Mammary epithelial cell (primary cell): ENCODE measurements at regions of chr14 and their contacts with region 1.

Region 1: DNA sequence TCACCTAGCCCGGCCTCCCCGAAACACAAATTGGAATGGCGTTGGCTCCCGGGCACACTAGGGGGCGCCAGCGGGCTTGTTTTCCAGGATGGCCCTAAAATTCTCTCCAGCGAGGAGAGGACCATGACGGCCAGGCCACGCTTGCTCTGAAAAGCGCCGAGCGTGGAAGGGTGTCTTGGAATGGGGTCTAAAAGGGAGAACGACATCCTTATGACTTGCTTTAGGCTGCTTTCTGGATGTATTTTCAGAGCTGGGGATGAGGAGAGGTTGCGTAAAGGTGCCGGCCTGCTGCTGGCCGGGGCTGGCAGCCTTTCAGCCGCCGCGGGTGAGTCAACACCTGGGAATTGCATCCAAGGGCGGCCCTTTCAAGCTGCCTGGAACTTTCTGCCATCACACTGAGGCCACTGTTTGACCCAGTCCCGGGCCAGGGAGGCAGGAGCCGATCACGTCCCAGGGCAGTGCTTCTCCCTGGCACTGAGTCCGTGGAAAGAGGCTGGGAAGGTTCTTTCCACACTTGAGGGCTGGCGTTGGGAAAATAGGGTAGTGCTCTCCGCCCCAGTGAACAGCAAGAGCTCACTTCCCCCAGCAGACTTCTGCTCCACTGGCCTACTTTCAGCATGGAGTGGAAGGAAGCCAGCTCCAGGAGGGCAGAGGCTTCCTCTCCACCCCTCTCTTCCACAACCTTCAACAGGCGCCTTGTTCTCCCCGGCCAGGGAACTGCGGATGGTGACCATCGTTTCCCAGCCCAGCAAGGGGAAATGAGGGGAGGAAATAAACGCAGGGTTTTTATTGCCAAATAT is 216.2 kb downstream of the TTC8 start:
- DNase-seq: peak; percentile 82
- H3K4me3 ChIP-seq: peak overlapping the region; percentile 28 to 47 (median 47)
- H3K27ac ChIP-seq: peak overlapping the region; percentile 69
- H3K4me1 ChIP-seq: peaks cover 14% of the 10 kb centered on the region
- H3K27me3 ChIP-seq: no peaks in the 10 kb centered on the region
- CTCF ChIP-seq: peak; percentile 95 to 99

Region 2: DNA sequence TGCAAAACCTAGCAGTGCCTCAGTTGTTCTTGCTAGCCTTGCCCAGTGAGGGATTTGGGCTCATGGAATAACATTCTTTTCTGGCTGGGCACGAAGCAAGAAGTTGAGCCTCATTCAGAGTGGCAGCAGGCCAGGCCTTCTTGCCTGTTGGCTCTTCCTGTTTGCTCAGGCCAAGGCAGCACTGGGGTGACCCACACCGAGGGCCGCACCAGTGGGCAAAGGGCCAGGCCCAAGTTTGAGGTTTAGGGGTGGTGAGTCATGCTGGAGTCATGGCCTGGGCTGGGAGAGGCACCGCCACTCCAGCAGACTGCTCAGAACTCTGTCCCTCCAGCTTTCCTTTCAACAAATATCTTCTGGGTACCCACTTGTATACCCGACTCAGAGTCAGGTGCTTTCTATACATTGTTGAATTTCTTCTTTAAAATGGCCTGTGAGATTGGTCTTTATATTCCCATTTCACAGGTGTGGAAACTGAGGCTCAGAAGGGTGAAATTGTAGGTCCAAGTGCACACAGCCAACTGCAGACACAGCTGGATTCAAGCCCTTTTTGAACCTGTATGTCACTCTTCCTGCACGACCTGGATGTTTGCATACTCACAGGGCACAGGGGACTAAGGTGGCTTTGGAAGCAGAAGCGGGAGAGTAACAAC is 97.0 kb after region 1 on chr14:
- CTCF ChIA-PET with region 1: no interaction called
- dilution Hi-C with region 1: no loop called
- in situ Hi-C with region 1: no loop called
- intact Hi-C with region 1: loop called (anchors 5 kb)
- DNase-seq: peak; percentile 94
- H3K4me3 ChIP-seq: no peak overlapping the region
- H3K27ac ChIP-seq: no peak overlapping the region
- H3K4me1 ChIP-seq: peaks cover 25% of the 10 kb centered on the region
- H3K27me3 ChIP-seq: no peaks in the 10 kb centered on the region
- CTCF ChIP-seq: no peak

Region 3: DNA sequence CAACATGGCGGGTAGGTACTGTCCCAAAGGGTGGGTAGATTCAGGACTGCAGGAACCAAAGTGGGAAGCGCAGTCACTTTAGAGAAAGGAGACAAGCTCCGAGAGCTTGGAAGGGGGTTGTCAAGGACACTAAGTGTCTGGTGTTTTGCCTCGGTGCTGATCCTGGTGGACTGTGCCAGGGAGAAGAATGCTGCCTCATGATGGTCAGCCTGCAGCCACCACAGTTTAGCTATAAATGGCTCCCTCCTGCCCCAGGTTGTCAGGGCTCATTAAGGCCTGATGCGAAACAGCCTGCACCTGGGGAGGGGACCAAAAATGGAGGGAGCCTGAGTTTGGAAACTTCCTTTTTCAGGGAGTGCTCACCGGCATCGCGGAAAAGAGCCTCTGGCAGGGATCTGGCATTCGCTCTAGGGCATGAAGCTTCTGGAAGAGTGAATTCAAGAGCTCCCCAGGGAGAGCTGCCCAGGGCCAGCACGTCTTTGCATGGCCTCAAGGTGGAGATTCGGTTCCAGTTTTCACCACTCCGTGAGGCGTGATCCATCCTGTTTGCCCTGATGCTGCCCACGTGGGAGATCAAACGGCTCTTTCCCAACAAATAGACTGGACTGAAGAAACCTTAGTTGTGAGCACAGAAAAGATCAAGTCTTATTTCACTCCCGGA is 212.4 kb after region 1 on chr14:
- CTCF ChIA-PET with region 1: no interaction called
- dilution Hi-C with region 1: no loop called
- in situ Hi-C with region 1: no loop called
- intact Hi-C with region 1: loop called (anchors 5 kb)
- DNase-seq: no peak
- H3K4me3 ChIP-seq: no peak overlapping the region
- H3K27ac ChIP-seq: no peak overlapping the region
- H3K4me1 ChIP-seq: no peaks in the 10 kb centered on the region
- H3K27me3 ChIP-seq: no peaks in the 10 kb centered on the region
- CTCF ChIP-seq: peak in 1 of 2 donors; percentile 30

Region 4: DNA sequence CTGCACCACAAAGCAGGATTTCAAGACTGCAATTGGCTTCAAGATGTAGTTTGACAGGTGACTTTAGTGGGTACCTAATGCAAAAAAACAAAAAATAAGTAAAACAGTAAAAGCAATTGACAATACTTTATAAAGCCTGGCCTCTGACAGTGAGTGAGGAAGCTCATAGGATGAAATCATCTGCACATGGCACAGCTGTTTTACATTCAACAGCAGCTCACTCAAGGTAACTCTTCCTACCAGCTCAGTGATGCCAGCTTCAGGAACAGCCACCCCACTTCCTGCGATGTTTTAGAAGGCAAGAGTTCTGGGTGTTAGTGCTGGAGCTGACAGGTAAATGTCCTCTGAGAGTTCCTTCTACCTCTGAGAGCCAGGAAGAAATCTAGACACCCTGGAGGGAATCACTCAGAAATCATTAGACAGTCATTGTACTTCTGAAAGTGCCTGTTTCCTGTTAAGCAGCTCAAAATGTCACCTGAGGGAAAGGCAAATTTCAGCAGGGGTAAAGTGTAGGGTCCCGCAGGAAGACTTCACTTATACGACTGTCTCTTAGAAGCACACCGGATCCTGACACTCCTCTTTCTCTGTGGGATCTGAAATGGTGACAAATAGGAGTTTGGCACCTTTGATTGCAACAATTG is 276.5 kb after region 1 on chr14:
- CTCF ChIA-PET with region 1: no interaction called
- dilution Hi-C with region 1: no loop called
- in situ Hi-C with region 1: no loop called
- intact Hi-C with region 1: no loop called
- DNase-seq: no peak
- H3K4me3 ChIP-seq: no peak overlapping the region
- H3K27ac ChIP-seq: no peak overlapping the region
- H3K4me1 ChIP-seq: no peaks in the 10 kb centered on the region
- H3K27me3 ChIP-seq: no peaks in the 10 kb centered on the region
- CTCF ChIP-seq: no peak

Region 5: DNA sequence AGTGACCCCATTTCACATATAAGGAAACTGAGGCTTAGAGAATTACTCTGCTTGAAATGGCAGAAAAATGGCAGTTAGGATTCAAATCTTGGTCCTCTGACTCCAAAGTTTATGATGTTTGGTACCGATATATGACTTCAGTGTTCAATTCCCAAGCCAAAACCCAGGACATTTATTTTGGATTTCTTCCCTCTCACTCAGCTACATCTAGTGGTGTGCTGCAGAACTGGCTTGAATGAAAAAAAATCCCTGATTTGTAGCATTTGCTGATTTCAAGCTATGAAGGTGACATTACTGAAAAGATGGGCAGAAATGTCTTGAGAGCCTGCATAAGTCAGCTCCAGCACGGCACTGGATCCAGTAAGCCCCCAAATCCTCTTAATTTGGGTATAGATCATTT is 807.5 kb after region 1 on chr14:
- CTCF ChIA-PET with region 1: no interaction called
- dilution Hi-C with region 1: no loop called
- in situ Hi-C with region 1: no loop called
- intact Hi-C with region 1: loop called (anchors 1 kb)
- DNase-seq: no peak
- H3K4me3 ChIP-seq: no peak overlapping the region
- H3K27ac ChIP-seq: no peak overlapping the region
- H3K4me1 ChIP-seq: peaks cover 5% of the 10 kb centered on the region
- H3K27me3 ChIP-seq: no peaks in the 10 kb centered on the region
- CTCF ChIP-seq: peak; percentile 25 to 58

Region 6: GRCh38 chr14:89915114-89915878 is 874.6 kb after region 1 on chr14:
- CTCF ChIA-PET with region 1: no interaction called
- dilution Hi-C with region 1: no loop called
- in situ Hi-C with region 1: loop called in 1 of 2 experiments (anchors 25 kb)
- intact Hi-C with region 1: loop called (anchors 1 kb)
- DNase-seq: peak; percentile 55
- H3K4me3 ChIP-seq: no peak overlapping the region
- H3K27ac ChIP-seq: no peak overlapping the region
- H3K4me1 ChIP-seq: peaks cover 6% of the 10 kb centered on the region
- H3K27me3 ChIP-seq: no peaks in the 10 kb centered on the region
- CTCF ChIP-seq: peak; percentile 89 to 92